Activated T-helper 1 cell treated with anti-CD3 and anti-CD28 coated beads, Interleukin-12 subunit alpha, Interleukin-12 subunit beta, Interleukin-2, Interleukin-4 antibody, amounts not matched to agents 30 ng/mL and 10 ng/mL and 1 ng/mL, durations not matched to agents 14 hours and 24 hours and 36 hours (primary cell): ENCODE measurements at regions of chr11 and their contacts with region 1.

Region 1: DNA sequence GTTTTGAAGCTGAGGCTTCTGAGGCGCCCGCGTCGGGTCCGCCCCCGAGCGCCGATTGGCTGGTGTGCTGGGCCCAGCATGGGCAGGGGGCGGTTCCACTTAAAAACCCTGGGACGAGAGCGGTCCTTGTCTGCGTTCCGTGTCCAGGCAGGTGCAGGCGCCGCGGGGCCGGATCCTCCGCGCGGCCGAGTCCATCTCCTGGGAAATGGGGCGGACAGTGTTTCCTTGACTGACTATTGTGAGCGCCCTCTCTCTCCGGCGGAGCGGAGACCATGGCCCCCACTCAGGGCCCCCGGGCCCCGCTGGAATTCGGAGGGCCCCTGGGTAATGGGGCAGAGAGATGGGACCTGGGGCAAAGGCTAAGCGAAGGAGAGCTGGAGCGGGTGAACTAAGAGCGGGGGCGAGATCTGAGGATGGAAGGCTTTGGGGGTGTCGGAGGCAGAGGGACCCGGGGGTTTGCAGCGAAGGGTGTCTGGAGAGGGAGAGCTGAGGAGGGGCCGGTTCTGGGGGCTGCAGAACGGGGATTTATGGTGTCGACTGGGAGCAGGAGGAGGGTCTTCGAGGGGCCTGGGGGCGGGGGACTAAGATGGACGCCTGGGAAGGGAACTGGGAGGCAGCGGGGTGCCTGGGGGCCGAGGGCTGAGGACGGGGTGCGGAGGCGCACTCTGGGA is at the start of gene TM7SF2:
- DNase-seq: peak; percentile 91
- H3K4me3 Mint-ChIP-seq: peak within 1 kb of the TSS; percentile 92
- H3K27ac Mint-ChIP-seq: peak within 1 kb of the TSS; percentile 89
- H3K4me1 Mint-ChIP-seq: peaks cover 34% of the 10 kb centered on the region
- H3K27me3 Mint-ChIP-seq: peaks cover 2% of the 10 kb centered on the region
- total RNA-seq, gene TM7SF2: 32.2 and 32.8 TPM in 2 replicates

Region 2: DNA sequence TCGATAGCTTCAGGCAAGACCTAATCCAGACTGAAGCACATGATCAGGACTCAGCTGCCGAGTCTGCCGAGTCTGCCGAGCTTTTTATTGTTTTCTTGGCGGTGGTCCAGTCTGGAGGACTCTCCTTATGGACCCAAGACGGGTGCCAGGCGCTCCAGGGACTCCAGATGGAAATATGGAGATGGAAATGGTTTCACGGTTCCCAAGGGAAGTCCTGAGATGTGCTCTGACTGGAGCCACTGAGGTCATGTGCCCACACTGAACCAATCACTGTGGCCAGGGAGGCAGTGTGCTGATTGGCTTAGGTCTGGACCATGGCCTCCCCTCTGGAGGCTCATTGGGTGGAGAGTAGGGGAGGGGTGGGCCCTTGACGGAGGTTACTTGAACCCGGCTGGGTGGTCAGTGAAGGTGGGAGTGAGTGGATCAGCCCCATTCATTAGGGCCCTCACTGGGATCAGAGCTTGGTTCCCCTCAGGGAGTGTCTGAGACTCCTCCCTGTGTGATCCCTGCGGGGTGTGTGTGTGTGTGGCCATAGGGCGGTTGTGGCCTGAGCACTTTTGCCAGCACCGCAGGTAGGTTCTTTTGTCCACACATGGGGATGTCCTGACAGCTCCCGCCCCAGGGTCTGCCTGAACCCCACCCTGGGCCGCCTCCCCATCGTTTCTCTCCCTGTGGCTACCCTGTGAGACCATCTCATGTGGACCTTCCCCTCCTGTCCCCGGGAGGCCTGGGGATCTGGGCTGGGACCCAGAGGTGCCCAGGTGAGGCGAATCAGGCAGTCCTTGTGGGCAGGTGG is 738.9 kb before region 1 on chr11:
- intact Hi-C with region 1: no loop called
- DNase-seq: no peak
- H3K4me3 Mint-ChIP-seq: no peak overlapping the region
- H3K27ac Mint-ChIP-seq: no peak overlapping the region
- H3K4me1 Mint-ChIP-seq: no peaks in the 10 kb centered on the region
- H3K27me3 Mint-ChIP-seq: no peaks in the 10 kb centered on the region

Region 3: GRCh38 chr11:64803163-64803845 is 308.6 kb before region 1 on chr11 and contains the start of gene MAP4K2:
- intact Hi-C with region 1: loop called (anchors 5 kb)
- DNase-seq: peak; percentile 89
- H3K4me3 Mint-ChIP-seq: peak within 1 kb of the TSS; percentile 88
- H3K27ac Mint-ChIP-seq: peak within 1 kb of the TSS; percentile 83
- H3K4me1 Mint-ChIP-seq: peaks cover 26% of the 10 kb centered on the region
- H3K27me3 Mint-ChIP-seq: no peaks in the 10 kb centered on the region
- total RNA-seq, gene MAP4K2: 70.2 and 70.7 TPM in 2 replicates

Region 4: GRCh38 chr11:65095974-65096806 is 15.7 kb before region 1 on chr11 and contains the start of gene VPS51:
- intact Hi-C with region 1: loop called (anchors 1 kb)
- DNase-seq: peak; percentile 80
- H3K4me3 Mint-ChIP-seq: peak within 1 kb of the TSS; percentile 91
- H3K27ac Mint-ChIP-seq: peak within 1 kb of the TSS; percentile 94
- H3K4me1 Mint-ChIP-seq: peaks cover 11% of the 10 kb centered on the region
- H3K27me3 Mint-ChIP-seq: no peaks in the 10 kb centered on the region
- total RNA-seq, gene VPS51: 137 and 139 TPM in 2 replicates

Region 5: GRCh38 chr11:65180877-65181568 is 69.1 kb after region 1 on chr11:
- intact Hi-C with region 1: loop called (anchors 1 kb)
- DNase-seq: peak; percentile 52
- H3K4me3 Mint-ChIP-seq: peak overlapping the region; percentile 85
- H3K27ac Mint-ChIP-seq: peak overlapping the region; percentile 52
- H3K4me1 Mint-ChIP-seq: peaks cover 5% of the 10 kb centered on the region
- H3K27me3 Mint-ChIP-seq: peaks cover 19% of the 10 kb centered on the region